ENCODE measurements at regions of chr1 and their contacts with region 1.

Region 1: GRCh38 chr1:231584124-231584523 is 42.5 kb upstream of the DISC1 start:
- DNase-seq: peak in 1 of 7 donors; percentile 23
- H3K4me3 ChIP-seq: no peak overlapping the region
- H3K27ac ChIP-seq: no peak overlapping the region
- H3K4me1 ChIP-seq: no peaks in the 10 kb centered on the region
- H3K27me3 ChIP-seq: no peaks in the 10 kb centered on the region
- CTCF ChIP-seq: peak in 3 of 6 experiments; percentile 22 to 35 (median 23)
- POLR2A ChIP-seq: no peak

Region 2: GRCh38 chr1:231357831-231358354 is 226.2 kb before region 1 on chr1:
- intact Hi-C with region 1: loop called in 1 of 2 experiments (anchors 10 kb)
- DNase-seq: peak; percentile 28 to 70 (median 54)
- H3K4me3 ChIP-seq: no peak overlapping the region
- H3K27ac ChIP-seq: no peak overlapping the region
- H3K4me1 ChIP-seq: peaks cover 0 to 11% of the 10 kb centered on the region in 2 donors
- H3K27me3 ChIP-seq: no peaks in the 10 kb centered on the region
- CTCF ChIP-seq: peak; percentile 61 to 89 (median 85)
- POLR2A ChIP-seq: no peak

Region 3: DNA sequence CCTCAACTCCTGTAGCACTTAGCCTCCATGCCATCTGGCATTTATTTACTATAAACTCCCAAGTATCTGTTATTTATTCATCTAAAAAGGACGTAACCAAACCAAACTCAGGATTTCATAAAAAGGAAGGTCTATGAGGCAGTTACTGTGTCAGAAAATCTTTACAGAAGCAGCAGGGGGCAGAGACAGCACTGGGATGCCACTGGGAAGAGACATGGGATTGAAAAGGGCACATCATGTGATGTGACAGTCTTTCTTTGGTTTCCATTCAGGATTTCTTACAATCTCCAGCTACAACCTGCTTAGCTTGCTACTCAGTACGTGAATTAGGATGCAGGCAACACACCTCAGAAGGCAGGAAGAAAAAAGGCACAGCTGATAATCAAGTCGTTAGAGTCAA is 214.8 kb before region 1 on chr1:
- intact Hi-C with region 1: no loop called
- DNase-seq: no peak
- H3K4me3 ChIP-seq: no peak overlapping the region
- H3K27ac ChIP-seq: no peak overlapping the region
- H3K4me1 ChIP-seq: no peaks in the 10 kb centered on the region
- H3K27me3 ChIP-seq: no peaks in the 10 kb centered on the region
- CTCF ChIP-seq: no peak
- POLR2A ChIP-seq: no peak

Region 4: GRCh38 chr1:231534703-231535159 is 49.4 kb before region 1 on chr1:
- intact Hi-C with region 1: loop called in 1 of 2 experiments (anchors 10 kb)
- DNase-seq: no peak
- H3K4me3 ChIP-seq: no peak overlapping the region
- H3K27ac ChIP-seq: no peak overlapping the region
- H3K4me1 ChIP-seq: peaks cover 2 to 37% of the 10 kb centered on the region in 2 donors
- H3K27me3 ChIP-seq: no peaks in the 10 kb centered on the region
- CTCF ChIP-seq: no peak
- POLR2A ChIP-seq: no peak